ENCODE measurements at regions of chr2 and their contacts with region 1.

Region 1: DNA sequence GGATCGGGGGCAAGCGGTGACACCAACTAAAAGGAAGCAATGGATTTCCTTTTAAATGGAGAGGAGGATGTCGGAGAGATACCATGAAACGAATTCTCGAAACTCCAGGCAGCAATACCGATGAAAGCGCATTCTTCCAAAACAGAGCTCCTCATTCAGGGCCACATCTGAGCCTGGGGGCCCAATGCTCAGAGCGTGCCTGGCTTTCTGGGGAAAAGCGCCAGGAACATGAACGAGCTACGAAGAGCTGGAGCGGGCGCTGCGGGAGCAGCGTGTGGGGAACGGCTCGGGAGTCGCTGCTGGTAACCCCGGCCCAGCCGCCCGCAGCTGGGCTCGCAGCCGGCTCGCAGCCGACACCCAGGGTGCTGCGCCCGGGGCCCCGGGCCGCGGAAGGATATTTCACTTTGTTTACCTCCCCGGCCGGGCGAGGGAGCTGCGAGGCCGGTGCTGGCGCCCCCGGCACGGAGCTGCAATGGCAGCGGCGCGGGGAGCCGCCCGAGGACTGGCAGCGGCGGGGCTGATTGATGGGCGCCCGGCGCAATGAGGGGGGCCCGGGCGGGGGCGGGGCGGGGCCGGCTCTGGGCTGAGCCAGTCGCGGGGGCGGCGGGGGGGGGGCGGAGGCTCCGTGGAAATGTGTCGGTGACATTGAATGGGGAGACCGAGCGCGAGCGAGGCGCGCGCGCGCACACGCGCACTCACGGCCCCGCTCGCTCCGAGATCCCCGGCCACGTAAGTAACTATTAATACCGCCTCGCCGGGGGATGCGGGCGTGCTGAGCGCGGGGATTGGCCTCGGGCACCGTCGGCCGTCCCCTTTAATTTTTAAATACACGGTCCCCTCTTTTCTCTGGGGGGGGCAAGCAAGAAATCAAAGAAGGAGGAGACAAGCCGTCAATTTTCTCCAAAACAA is at the start of gene TRIB2:
- DNase-seq: peak; percentile 90
- ATAC-seq: peak; percentile 74
- H3K4me3 Mint-ChIP-seq: peak within 1 kb of the TSS; percentile 92
- H3K27ac Mint-ChIP-seq: peak within 1 kb of the TSS; percentile 95
- H3K4me1 Mint-ChIP-seq: peaks cover 48% of the 10 kb centered on the region
- H3K27me3 Mint-ChIP-seq: no peaks in the 10 kb centered on the region
- total RNA-seq, gene TRIB2: 2.7 to 3.7 TPM

Region 2: DNA sequence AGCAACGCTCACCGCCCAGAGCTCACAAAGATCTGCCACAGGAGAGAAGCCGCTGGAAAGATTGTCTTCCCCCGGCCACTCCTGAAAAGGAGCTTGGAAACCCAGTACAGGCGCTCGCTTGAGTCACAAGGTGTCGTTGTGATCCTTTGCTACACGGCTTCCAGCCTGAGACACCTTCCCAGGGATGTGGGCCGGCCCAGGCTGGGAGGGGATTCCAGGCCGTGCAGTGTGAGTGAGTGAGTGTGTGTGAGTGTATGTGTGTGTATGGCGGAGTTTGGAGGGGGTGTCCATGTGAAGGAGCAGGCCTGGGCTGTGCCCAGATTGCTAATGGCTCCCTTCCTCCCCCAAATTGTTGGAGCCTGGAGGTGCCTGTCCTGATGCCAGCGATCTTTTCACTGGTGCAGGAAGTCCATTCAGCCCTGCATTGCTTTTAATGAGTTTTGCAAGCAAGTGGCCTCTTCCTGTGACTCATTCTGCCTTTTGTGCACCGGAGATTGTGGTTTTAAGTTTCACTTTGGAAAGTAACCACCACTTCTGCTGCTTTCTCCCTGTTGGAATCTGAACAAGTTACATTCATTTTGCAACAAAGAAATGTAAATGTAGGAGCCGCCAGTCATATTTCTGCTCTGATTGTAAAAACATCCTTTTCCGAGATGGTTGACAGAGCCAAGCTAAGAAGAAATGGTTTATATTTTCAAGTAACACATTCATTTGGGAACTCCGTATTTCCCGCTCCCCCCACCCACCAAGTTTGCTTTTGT is 886.4 kb before region 1 on chr2:
- CTCF ChIA-PET with region 1: interaction called, 5 read pairs
- POLR2A ChIA-PET with region 1: no interaction called
- intact Hi-C with region 1: loop called (anchors 1 kb)
- DNase-seq: peak; percentile 67
- ATAC-seq: peak; percentile 77
- H3K4me3 Mint-ChIP-seq: peak overlapping the region; percentile 20
- H3K27ac Mint-ChIP-seq: peak overlapping the region; percentile 58
- H3K4me1 Mint-ChIP-seq: peaks cover 40% of the 10 kb centered on the region
- H3K27me3 Mint-ChIP-seq: peaks cover 26% of the 10 kb centered on the region

Region 3: DNA sequence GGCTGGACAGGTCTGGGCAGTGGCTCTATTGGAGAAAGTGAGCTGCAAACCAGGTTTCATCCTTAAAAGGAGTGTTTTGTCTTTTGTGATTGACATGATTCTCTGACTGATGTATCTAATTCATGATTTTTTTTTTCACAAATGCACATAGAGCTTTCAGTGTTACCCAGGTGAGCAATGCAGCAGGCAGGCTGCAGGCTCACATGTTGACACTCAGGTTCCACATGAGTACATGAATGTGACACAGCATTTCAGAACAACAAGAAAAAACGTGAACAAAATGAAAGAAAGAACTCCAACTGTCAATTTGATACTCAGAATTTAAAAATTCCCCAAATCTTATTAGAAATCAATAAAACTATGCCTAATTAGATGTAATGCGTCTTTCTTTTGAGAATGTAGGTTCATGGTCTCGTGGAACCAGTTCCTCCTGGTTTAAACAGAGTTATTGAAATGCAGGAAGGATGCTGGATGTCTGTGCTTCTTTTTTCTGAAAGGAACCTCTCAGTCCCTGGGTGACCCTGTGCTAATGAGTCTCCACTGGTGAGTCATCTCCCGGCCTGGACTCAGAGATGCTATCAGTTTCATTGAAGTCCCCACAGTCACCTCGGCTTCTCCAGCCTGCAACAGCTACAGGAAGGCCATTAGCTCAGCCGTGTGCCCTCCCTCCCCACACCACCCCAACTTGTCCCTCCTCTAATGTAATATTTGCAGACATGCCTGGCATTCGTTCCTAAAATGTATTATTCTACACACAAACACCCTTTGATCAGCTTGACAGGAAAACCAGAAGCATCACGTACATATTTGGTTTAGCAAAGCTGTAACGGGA is 539.7 kb before region 1 on chr2:
- CTCF ChIA-PET with region 1: no interaction called
- POLR2A ChIA-PET with region 1: no interaction called
- intact Hi-C with region 1: loop called in 1 of 2 experiments (anchors 10 kb)
- DNase-seq: peak; percentile 33
- ATAC-seq: peak; percentile 75
- H3K4me3 Mint-ChIP-seq: no peak overlapping the region
- H3K27ac Mint-ChIP-seq: no peak overlapping the region
- H3K4me1 Mint-ChIP-seq: peaks cover 37% of the 10 kb centered on the region
- H3K27me3 Mint-ChIP-seq: no peaks in the 10 kb centered on the region

Region 4: DNA sequence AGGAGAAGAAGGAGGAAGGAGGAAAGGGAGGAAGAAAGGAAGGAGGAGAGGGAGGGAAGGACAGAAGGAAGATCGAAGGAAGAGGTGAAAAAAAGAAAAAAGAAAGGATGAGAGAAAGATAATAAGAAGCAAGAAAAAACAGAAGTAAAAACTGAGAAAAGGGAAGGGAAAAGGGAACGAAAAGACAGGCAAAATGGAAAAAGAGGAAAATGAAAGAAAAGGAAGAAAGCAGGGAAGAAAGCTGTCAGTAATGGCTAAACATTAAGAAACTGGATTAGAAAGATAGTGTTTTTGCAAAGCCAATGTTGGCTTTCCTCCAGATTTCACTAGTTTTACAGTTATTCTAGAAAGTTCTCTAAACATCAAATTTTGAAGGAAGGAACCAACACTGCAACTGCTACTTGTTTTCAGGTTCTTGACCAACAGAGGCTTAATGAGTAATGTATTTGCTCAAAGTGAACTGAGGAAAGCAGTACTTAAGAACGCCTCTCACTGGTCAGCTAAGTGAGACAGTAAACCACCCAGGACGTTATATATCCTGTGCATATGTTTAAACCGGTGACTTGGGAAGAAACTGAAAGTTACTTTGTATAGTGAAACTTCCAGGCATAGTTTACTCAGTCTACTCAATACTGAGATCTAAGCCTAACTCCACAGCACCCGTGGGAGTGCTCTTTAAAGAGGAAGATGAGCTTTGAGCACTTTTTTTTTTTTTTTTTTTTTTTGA is 286.0 kb before region 1 on chr2:
- CTCF ChIA-PET with region 1: interaction called, 6 read pairs
- POLR2A ChIA-PET with region 1: no interaction called
- intact Hi-C with region 1: loop called (anchors 5 kb)
- DNase-seq: peak; percentile 55
- ATAC-seq: peak; percentile 98
- H3K4me3 Mint-ChIP-seq: no peak overlapping the region
- H3K27ac Mint-ChIP-seq: peak overlapping the region; percentile 5
- H3K4me1 Mint-ChIP-seq: peaks cover 21% of the 10 kb centered on the region
- H3K27me3 Mint-ChIP-seq: no peaks in the 10 kb centered on the region

Region 5: GRCh38 chr2:12555012-12555645 is 161.4 kb before region 1 on chr2:
- CTCF ChIA-PET with region 1: interaction called, 12 read pairs
- POLR2A ChIA-PET with region 1: no interaction called
- intact Hi-C with region 1: loop called (anchors 2 to 5 kb)
- DNase-seq: peak; percentile 55
- ATAC-seq: peak; percentile 92
- H3K4me3 Mint-ChIP-seq: peak overlapping the region; percentile 33
- H3K27ac Mint-ChIP-seq: peak overlapping the region; percentile 75
- H3K4me1 Mint-ChIP-seq: peaks cover 36% of the 10 kb centered on the region
- H3K27me3 Mint-ChIP-seq: no peaks in the 10 kb centered on the region

Region 6: GRCh38 chr2:12931186-12931844 is 214.8 kb after region 1 on chr2:
- CTCF ChIA-PET with region 1: interaction called, 3 read pairs
- POLR2A ChIA-PET with region 1: no interaction called
- intact Hi-C with region 1: loop called (anchors 2 kb)
- DNase-seq: no peak
- ATAC-seq: no peak
- H3K4me3 Mint-ChIP-seq: no peak overlapping the region
- H3K27ac Mint-ChIP-seq: no peak overlapping the region
- H3K4me1 Mint-ChIP-seq: peaks cover 15% of the 10 kb centered on the region
- H3K27me3 Mint-ChIP-seq: peaks cover 11% of the 10 kb centered on the region